Psoas muscle (tissue), 8 donors: ENCODE measurements at regions of chr4 and their contacts with region 1.

Region 1: GRCh38 chr4:110540982-110541440 is 65.1 kb downstream of the ENPEP start:
- DNase-seq: no peak
- ATAC-seq: peak; percentile 32 to 62 (median 46)
- H3K4me3 ChIP-seq: no peak overlapping the region
- H3K27ac ChIP-seq: peak overlapping the region; percentile 13
- H3K4me1 ChIP-seq: peaks cover 9% of the 10 kb centered on the region
- H3K27me3 ChIP-seq: no peaks in the 10 kb centered on the region
- CTCF ChIP-seq: no peak

Region 2: DNA sequence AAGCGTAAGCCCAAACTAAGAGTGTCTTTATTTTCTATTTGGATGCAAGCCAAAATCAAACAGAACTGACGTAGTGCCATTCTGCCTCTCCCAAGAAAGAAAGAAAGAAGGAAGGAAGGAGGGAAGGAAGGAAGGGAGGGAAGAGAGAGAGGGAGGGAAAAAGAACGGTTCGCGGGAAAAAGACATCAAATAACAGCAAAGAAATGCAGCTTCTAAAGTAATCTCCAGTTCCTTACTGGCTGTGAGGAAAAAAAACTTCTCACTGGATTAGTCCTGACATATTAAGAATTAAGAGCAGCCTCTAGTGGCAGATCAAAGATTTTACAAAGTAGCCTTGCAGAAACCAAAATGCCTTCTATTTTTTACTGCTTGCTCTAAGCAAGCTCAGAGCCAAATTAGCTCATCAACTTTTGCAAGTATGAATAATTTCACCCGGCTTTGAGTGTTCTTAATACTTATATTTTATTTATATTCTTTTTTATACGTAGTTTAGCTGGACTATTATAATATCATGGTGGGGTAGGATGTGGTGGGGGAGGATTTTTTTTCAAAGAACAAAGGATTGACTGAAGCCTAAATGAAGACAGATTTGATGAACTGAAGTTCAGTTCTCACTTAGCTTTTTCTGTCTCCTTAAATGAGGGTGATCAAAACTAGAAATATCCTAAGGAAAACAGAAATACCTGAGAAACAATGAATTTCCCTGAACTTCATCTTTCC is 45.3 kb after region 1 on chr4:
- intact Hi-C with region 1: loop called in 1 of 2 experiments (anchors 5 kb)
- DNase-seq: no peak
- ATAC-seq: peak; percentile 40 to 90 (median 72)
- H3K4me3 ChIP-seq: peak overlapping the region; percentile 60
- H3K27ac ChIP-seq: no peak overlapping the region
- H3K4me1 ChIP-seq: no peaks in the 10 kb centered on the region
- H3K27me3 ChIP-seq: no peaks in the 10 kb centered on the region
- CTCF ChIP-seq: peak; percentile 59

Region 3: DNA sequence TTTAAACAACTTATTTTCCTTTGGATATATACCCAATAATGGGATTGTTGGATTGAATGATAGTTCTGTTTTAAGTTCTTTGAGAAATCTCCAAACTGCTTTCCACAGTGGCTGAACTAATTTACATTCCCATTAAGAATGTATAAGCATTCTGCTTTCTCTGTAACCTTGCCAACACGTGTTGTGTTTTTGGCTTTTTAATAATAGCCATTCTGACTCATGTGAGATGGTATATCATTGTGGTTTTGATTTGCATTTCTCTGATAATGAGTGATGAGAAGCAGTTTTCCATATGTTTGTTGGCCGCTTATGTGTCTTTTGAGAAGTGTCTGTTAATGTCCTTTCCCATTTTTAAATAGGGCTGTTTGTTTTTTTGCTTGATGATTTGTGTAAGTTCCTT is 237.5 kb after region 1 on chr4:
- intact Hi-C with region 1: no loop called
- DNase-seq: no peak
- ATAC-seq: no peak
- H3K4me3 ChIP-seq: no peak overlapping the region
- H3K27ac ChIP-seq: no peak overlapping the region
- H3K4me1 ChIP-seq: peaks cover 6% of the 10 kb centered on the region
- H3K27me3 ChIP-seq: no peaks in the 10 kb centered on the region
- CTCF ChIP-seq: no peak

Region 4: DNA sequence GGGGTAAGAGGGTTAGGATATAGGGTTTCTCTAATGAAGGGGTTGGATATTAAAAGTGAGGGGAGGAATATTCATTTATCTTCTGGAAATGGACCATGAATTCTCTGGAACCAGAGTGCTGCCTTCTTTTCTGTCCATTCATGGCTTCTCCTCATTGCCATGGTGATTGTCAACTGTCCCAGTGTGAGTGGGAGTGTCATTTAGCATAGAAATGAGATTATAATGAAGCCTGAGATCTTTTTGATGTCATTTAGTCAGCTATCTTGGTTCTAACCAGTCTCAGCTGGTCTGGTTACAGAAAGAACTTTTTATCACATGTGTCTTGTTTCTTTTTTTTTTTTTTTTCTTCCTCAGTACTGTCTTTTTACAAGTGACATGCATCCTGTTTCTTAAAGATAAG is 579.2 kb after region 1 on chr4:
- intact Hi-C with region 1: no loop called
- DNase-seq: no peak
- ATAC-seq: no peak
- H3K4me3 ChIP-seq: no peak overlapping the region
- H3K27ac ChIP-seq: no peak overlapping the region
- H3K4me1 ChIP-seq: no peaks in the 10 kb centered on the region
- H3K27me3 ChIP-seq: no peaks in the 10 kb centered on the region
- CTCF ChIP-seq: no peak